Posterior cingulate gyrus (tissue), 11 donors: ENCODE measurements at regions of chr17 and their contacts with region 1.

Region 1: GRCh38 chr17:36534840-36535668 is at the starts of genes MYO19 and PIGW:
- DNase-seq: peak; percentile 76 to 97 (median 86)

Region 2: GRCh38 chr17:36443777-36444176 is 91.3 kb before region 1 on chr17:
- intact Hi-C with region 1: no loop called
- DNase-seq: no peak

Region 3: GRCh38 chr17:36463916-36464315 is 71.1 kb before region 1 on chr17:
- intact Hi-C with region 1: no loop called
- DNase-seq: peak in 7 of 10 donors; percentile 12 to 90 (median 53)

Region 4: GRCh38 chr17:36493956-36494355 is 41.1 kb before region 1 on chr17:
- intact Hi-C with region 1: loop called (anchors 5 kb)
- DNase-seq: no peak

Region 5: GRCh38 chr17:36545465-36546417 is 10.7 kb after region 1 on chr17:
- intact Hi-C with region 1: loop called (anchors 1 kb)
- DNase-seq: peak in 9 of 10 donors; percentile 95 to 100 (median 96)